ENCODE measurements at regions of chr14 and their contacts with region 1.

Region 1: DNA sequence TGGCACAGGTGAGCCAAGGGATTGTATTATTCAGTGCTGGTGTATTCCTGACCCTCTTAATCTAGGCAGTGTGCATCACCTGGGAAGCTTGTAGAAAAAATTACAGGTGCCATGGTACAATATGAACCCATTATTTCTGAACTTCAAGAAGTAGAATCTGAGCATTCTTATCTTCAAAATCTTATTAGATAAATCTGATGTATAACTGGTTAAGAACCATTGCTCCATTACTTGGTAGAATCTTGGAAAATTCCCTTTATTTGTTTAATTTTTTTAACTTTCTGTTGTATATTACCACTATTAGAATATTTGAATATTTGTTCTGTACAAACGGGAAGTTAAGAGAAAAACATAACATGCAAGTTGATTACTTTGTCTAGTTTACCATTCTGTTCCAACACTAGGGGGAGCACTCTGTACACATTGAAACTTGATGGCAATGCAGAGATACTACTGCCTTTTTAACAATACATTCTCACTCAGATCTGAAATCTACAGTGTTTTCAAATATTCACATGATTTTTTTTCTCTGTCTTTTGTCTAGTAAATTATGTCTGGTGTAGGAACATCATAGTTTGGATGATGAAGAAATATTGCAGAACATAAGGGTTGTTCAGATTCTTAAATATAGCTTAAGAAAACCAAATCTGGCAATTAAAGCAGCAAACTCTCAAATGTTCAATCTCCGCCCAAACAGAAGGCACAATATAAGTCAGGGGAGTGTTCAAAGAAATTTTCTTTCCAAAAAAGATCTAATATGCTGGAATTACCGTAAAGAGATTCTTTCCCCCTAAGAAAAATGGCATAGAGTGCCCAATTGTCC is 196.6 kb downstream of the PCNX1 start:
- DNase-seq: peak in 3 of 9 experiments; percentile 17 to 67 (median 53)
- ATAC-seq: peak; percentile 55
- H3K4me3 ChIP-seq: no peak overlapping the region
- H3K4me3 Mint-ChIP-seq: no peak overlapping the region
- H3K27ac ChIP-seq: no peak overlapping the region
- H3K27ac Mint-ChIP-seq: peak overlapping the region; percentile 14
- H3K4me1 ChIP-seq: no peaks in the 10 kb centered on the region
- H3K4me1 Mint-ChIP-seq: peaks cover 8% of the 10 kb centered on the region
- H3K27me3 ChIP-seq: no peaks in the 10 kb centered on the region
- H3K27me3 Mint-ChIP-seq: no peaks in the 10 kb centered on the region
- CTCF ChIP-seq: peak; percentile 88

Region 2: DNA sequence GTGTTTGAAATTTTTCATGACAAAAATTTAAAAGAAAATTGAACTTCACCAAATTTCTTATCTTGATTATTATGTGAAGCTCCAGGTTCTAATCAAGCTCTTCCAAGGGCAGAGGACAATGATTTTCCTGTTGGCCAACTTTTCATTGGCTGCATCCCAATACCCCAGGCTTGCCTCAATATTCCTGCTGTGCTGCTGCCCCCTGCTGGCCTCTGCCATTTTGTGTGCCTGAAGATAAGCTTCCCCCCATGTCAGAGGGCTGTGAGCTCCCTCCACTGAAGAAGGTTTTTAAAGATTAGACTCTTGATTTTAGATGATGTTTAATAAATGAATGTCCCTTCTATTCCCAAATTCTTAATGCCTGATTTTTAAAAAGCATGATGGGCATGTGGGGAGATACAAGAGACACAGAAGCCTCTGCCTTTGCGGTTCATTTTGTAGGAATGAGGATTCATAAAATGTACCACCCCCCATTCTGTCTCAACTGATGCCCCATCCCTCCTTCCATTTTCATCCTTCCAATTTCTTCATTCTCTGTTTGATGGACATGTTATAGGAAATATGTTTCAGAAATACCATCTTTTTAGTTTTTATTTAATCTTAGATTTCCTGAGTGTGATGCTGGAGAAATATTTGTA is 751.6 kb after region 1 on chr14:
- CTCF ChIA-PET with region 1: no interaction called
- POLR2A ChIA-PET with region 1: no interaction called
- intact Hi-C with region 1: loop called in 1 of 2 experiments (anchors 10 kb)
- DNase-seq: peak in 8 of 9 experiments; percentile 19 to 58 (median 40)
- ATAC-seq: no peak
- H3K4me3 ChIP-seq: no peak overlapping the region
- H3K4me3 Mint-ChIP-seq: no peak overlapping the region
- H3K27ac ChIP-seq: no peak overlapping the region
- H3K27ac Mint-ChIP-seq: no peak overlapping the region
- H3K4me1 ChIP-seq: no peaks in the 10 kb centered on the region
- H3K4me1 Mint-ChIP-seq: no peaks in the 10 kb centered on the region
- H3K27me3 ChIP-seq: peaks cover 2 to 7% of the 10 kb centered on the region in 2 experiments
- H3K27me3 Mint-ChIP-seq: peaks cover 41% of the 10 kb centered on the region
- CTCF ChIP-seq: peak; percentile 41